ENCODE measurements at regions of chr12 and their contacts with region 1.

Region 1: GRCh38 chr12:6944381-6945186 is 762 bp downstream of the C12orf57 start:
- DNase-seq: peak; percentile 86 to 97
- H3K4me3 ChIP-seq: peak overlapping the region; percentile 80 to 91
- H3K27ac ChIP-seq: peak overlapping the region; percentile 96 to 99
- H3K4me1 ChIP-seq: peaks cover 0 to 21% of the 10 kb centered on the region in 2 donors
- H3K27me3 ChIP-seq: no peaks in the 10 kb centered on the region
- CTCF ChIP-seq: peak; percentile 77 to 95 (median 81)

Region 2: DNA sequence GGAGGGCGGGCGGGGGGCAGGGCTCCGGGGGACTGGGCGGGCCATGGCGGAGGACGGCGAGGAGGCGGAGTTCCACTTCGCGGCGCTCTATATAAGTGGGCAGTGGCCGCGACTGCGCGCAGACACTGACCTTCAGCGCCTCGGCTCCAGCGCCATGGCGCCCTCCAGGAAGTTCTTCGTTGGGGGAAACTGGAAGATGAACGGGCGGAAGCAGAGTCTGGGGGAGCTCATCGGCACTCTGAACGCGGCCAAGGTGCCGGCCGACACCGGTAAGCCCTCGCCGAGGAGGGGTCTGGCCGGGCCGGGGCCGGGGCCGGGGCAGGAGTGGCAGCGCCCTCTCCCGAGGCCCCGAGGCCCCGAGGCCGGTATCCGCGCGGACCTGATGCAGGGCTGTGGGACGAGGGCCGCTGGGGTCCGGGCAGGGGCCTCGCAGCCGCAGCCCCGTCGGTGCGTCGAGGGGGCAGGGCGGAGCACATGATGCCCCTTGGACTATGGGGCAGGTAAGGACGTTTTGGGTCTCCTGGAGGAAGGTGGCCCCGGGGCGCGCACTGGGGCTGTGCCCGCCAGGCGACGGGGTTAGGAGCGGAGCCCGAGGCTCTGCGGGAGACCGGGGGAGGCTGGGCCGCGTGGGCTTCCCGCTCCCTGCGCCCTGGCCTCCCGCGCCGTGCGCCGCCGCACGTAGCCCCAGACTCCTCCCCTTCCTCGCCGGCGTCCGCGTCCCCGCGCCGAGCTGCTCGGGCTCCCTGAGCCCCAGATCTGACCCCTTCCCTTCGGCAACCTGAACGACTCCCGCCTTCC is 77.0 kb before region 1 on chr12 and contains the start of gene TPI1:
- intact Hi-C with region 1: loop called (anchors 1 kb)
- DNase-seq: no peak
- H3K4me3 ChIP-seq: peak within 1 kb of the TSS; percentile 91 to 94
- H3K27ac ChIP-seq: peak within 1 kb of the TSS; percentile 99
- H3K4me1 ChIP-seq: peaks cover 14 to 40% of the 10 kb centered on the region in 2 donors
- H3K27me3 ChIP-seq: no peaks in the 10 kb centered on the region
- CTCF ChIP-seq: peak in 2 of 3 experiments; percentile 3 to 11
- total RNA-seq, gene TPI1: 482 TPM

Region 3: DNA sequence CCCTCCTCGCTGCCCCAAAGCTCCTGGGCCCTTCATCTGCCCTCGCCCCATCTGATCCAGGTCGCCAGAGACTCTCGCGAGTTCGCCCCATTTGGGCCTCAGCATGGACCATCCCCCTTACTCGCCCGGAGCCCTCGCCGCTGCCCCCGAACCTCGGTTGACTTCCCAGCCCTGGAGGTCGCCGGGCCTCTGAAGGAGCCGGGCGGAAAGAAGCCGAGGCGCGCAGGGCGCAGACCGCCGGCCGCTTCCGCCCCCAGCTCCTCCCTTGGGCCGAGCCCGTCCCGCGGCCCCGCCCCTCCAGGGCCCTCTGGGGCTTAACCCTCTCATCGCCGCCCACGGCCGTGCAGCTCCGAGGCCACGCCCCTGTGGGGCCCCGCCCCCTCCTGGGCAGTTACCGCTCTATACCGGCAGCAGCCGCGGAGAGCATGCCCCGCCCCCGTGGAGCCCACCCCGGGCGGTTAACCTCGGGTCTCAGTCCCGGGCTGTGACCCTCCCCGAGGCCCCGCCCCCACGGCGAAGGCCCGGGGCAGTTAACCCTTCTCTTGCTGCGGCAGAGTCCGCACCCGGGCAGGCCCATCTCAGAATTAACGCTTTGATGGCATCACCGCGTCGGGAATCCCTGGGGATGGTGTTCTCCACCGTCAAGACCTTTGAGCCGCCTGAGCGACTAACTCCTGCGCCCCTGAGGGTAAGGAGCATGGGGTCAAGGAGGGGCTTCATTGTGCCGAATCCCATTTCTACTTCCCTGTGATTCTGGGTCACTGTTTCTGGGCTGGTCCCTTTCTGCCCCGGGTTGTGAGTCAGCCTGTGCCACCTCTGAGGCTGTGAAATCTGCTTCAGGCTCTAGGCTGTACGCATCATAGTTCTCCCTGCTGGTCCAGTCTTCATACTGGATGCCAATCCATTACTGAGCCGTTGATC is 71.2 kb before region 1 on chr12 and contains the start of gene SPSB2:
- intact Hi-C with region 1: loop called (anchors 1 kb)
- DNase-seq: peak; percentile 85 to 99
- H3K4me3 ChIP-seq: peak within 1 kb of the TSS; percentile 82 to 90
- H3K27ac ChIP-seq: peak within 1 kb of the TSS; percentile 85 to 92
- H3K4me1 ChIP-seq: peaks cover 13 to 28% of the 10 kb centered on the region in 2 donors
- H3K27me3 ChIP-seq: no peaks in the 10 kb centered on the region
- CTCF ChIP-seq: no peak
- total RNA-seq, gene SPSB2: 14.5 TPM

Region 4: GRCh38 chr12:6965026-6965661 is 20.6 kb after region 1 on chr12:
- intact Hi-C with region 1: loop called (anchors 1 kb)
- DNase-seq: peak in 1 of 2 donors; percentile 90
- H3K4me3 ChIP-seq: no peak overlapping the region
- H3K27ac ChIP-seq: peak overlapping the region; percentile 64 to 75
- H3K4me1 ChIP-seq: peaks cover 0 to 28% of the 10 kb centered on the region in 2 donors
- H3K27me3 ChIP-seq: no peaks in the 10 kb centered on the region
- CTCF ChIP-seq: peak; percentile 82 to 88 (median 84)

Region 5: DNA sequence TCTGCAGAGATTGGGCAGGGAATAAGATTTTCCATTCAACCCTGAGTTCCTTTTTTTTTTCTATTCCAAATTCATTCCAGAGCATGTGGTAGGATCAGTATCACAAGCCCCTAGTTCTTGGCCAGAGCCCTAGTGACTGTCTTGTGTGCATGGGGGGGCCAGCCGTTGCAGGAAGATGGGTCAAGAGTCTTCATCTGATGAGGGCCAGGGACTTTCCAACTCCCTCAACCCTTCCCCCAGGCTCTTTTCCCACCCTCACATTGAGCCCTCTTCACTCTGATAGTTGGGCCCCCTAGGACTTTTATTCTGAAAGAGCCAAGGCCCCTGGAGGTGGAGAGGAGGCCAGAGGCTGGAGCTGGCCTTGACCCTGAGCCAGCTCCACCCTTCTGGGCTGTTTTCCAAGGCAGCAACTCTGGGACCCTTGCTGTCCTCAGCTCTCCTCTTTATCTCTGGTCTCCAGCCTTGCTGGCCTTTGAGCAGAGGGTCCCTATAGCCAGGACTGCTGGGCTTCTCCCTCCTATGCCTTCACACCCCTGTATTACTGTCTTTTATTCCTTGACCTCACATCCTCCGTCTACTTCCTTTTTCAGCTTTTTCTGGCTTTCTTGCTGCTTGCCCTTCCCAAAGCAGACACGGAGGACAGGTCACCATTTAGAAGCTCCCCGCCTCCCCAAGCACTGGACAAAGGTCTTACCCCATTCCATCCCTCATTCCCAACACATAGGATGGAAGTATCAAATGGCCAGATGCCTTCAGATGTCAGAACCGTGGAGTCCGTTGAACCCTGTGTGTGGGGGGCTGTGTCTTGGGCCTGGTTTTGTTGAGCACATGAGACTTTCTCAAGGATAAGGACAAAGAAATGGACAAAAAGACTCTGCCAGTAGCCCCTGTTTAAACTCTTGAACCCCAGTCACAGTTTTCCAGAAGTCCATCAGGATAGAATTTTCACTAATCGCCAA is 178.5 kb after region 1 on chr12:
- intact Hi-C with region 1: no loop called
- DNase-seq: no peak
- H3K4me3 ChIP-seq: no peak overlapping the region
- H3K27ac ChIP-seq: no peak overlapping the region
- H3K4me1 ChIP-seq: no peaks in the 10 kb centered on the region
- H3K27me3 ChIP-seq: no peaks in the 10 kb centered on the region
- CTCF ChIP-seq: no peak

Measured in ascending aorta (tissue), 2 donors.